Panc1 (cell line): ENCODE measurements at regions of chr2 and their contacts with region 1.

Region 1: GRCh38 chr2:102753563-102754159 is 8.2 kb upstream of the TMEM182 start:
- DNase-seq: peak; percentile 35
- ATAC-seq: peak; percentile 62; the same call in 1 of the 2 replicates
- H3K4me3 ChIP-seq: no peak overlapping the region
- H3K27ac ChIP-seq: no peak overlapping the region
- H3K4me1 ChIP-seq: no peaks in the 10 kb centered on the region
- H3K27me3 ChIP-seq: no peaks in the 10 kb centered on the region
- CTCF ChIP-seq: peak; percentile 84

Region 2: DNA sequence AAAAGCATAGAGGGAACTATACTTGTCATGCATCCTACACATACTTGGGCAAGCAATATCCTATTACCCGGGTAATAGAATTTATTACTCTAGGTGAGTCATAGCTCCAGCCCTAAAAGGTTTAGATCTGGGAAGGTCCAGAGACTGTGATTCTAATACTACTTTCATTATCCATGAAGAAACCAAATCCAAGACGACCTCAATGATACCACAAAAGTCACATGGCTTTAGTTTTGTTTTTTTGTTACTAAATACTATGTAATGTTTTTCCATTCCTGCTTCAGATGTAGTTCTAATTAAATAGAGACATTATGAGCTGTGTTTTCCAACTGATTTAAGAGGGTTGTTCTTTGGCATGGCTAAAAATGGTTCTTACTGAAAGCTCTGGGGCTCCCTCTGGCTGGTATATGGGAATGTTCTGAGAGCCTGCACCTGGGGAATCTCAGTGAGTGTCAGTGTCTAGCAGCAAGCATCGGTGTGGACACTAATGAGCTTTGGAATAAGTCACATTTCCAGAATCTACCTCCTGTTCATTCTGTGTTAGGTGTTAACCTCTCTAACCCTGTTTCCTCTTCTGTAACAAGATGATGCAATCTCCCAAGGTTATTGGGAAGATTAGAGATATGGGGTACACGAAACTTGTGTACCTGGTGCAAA is 587.3 kb before region 1 on chr2:
- CTCF ChIA-PET with region 1: no interaction called
- POLR2A ChIA-PET with region 1: no interaction called
- in situ Hi-C with region 1: no loop called
- intact Hi-C with region 1: no loop called
- DNase-seq: no peak
- ATAC-seq: no peak
- H3K4me3 ChIP-seq: no peak overlapping the region
- H3K27ac ChIP-seq: no peak overlapping the region
- H3K4me1 ChIP-seq: no peaks in the 10 kb centered on the region
- H3K27me3 ChIP-seq: no peaks in the 10 kb centered on the region
- CTCF ChIP-seq: peak; percentile 57

Region 3: GRCh38 chr2:102806250-102806837 is 52.7 kb after region 1 on chr2:
- CTCF ChIA-PET with region 1: interaction called, 18 read pairs
- POLR2A ChIA-PET with region 1: no interaction called
- in situ Hi-C with region 1: no loop called
- intact Hi-C with region 1: loop called (anchors 1 kb)
- DNase-seq: peak; percentile 69
- ATAC-seq: peak; percentile 90
- H3K4me3 ChIP-seq: no peak overlapping the region
- H3K27ac ChIP-seq: no peak overlapping the region
- H3K4me1 ChIP-seq: no peaks in the 10 kb centered on the region
- H3K27me3 ChIP-seq: no peaks in the 10 kb centered on the region
- CTCF ChIP-seq: peak; percentile 92

Region 4: DNA sequence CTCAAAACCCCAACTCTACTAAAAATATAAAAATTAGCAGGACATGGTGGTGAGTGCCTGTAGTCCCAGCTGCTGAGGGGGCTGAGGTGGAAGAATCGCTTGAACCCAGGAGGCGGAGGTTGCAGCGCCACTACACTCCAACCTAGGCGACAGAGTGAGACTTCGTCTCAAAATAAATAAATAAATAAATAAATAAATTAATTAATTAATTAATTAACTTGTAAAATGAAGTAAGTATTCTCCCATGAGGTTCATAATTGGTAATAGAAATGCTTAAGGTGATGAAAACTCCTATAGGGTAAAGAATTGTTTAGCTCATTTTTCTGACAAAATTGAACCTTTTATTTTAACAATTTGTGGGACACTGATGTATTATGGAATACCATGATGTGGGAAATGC is 238.9 kb after region 1 on chr2:
- CTCF ChIA-PET with region 1: no interaction called
- POLR2A ChIA-PET with region 1: no interaction called
- in situ Hi-C with region 1: no loop called
- intact Hi-C with region 1: no loop called
- DNase-seq: no peak
- ATAC-seq: no peak
- H3K4me3 ChIP-seq: no peak overlapping the region
- H3K27ac ChIP-seq: no peak overlapping the region
- H3K4me1 ChIP-seq: no peaks in the 10 kb centered on the region
- H3K27me3 ChIP-seq: no peaks in the 10 kb centered on the region
- CTCF ChIP-seq: no peak